Activated T-helper 2 cell treated with anti-CD3 and anti-CD28 coated beads, Interferon-gamma antibody, Interleukin-2, Interleukin-4, amounts not matched to agents 10 μg/mL and 5 μg/mL and 100 μg/mL, durations not matched to agents 14 hours and 24 hours and 36 hours (primary cell): ENCODE measurements at regions of chrX and their contacts with region 1.

Region 1: DNA sequence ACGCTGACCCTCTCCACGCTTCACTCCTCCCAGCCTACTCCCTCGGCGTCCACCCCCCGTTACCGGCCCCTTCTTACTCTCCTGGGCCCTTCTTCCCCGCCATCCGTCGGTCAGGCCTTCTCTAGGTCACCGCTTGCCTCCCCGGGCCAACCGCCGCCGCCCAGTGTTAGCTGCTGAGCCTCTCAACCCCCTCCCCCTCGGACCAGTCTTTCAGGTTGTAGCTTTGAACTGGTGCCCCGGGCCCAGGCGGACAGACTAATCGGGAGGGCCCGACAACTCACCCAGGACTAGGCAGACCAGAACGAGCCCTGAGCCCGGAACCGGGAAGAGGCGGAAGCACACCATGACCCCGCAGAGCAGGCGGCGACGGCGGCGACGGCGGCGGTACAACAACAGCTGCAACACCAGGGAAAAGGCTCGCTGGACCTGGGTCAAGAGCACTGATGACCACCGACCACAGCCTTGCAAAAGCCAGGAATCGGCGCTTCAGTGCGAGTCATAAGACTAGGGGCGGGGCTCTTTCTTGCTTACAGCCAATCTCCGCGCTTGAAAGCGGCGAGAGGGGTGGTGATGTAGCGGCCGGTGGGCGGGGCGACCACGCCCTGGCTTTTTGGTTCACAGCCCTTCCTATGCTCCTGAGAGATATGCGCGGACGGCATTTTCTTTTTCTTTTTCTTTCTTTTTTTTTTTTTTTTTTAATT is at the start of gene LAMP2:
- DNase-seq: peak; percentile 76
- H3K4me3 Mint-ChIP-seq: peak within 1 kb of the TSS; percentile 94
- H3K27ac Mint-ChIP-seq: peak within 1 kb of the TSS; percentile 79
- H3K4me1 Mint-ChIP-seq: peaks cover 19% of the 10 kb centered on the region
- H3K27me3 Mint-ChIP-seq: no peaks in the 10 kb centered on the region
- total RNA-seq, gene LAMP2: 39.8 and 40.7 TPM in 2 replicates

Region 2: DNA sequence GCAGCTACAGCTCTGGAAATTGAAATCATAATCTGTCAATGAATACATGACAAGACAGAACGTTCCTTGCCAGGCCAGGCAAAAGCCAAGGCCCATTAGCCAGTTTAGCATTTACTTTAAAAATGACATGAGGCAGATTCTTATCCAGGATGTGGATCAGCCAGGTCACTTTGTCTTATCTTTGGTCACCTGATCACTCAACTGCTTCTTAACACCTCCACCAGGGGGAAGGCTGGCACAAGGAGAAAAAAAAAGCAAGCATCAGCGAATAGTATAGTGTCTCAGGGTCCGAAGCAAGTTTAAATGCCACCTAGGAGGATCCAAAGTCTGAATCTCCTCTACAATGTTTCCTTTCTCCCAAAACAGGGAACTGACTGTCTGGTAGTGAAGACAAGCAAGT is 88.3 kb before region 1 on chrX:
- intact Hi-C with region 1: loop called (anchors 5 kb)
- DNase-seq: peak; percentile 13
- H3K4me3 Mint-ChIP-seq: no peak overlapping the region
- H3K27ac Mint-ChIP-seq: no peak overlapping the region
- H3K4me1 Mint-ChIP-seq: peaks cover 4% of the 10 kb centered on the region
- H3K27me3 Mint-ChIP-seq: peaks cover 12% of the 10 kb centered on the region

Region 3: DNA sequence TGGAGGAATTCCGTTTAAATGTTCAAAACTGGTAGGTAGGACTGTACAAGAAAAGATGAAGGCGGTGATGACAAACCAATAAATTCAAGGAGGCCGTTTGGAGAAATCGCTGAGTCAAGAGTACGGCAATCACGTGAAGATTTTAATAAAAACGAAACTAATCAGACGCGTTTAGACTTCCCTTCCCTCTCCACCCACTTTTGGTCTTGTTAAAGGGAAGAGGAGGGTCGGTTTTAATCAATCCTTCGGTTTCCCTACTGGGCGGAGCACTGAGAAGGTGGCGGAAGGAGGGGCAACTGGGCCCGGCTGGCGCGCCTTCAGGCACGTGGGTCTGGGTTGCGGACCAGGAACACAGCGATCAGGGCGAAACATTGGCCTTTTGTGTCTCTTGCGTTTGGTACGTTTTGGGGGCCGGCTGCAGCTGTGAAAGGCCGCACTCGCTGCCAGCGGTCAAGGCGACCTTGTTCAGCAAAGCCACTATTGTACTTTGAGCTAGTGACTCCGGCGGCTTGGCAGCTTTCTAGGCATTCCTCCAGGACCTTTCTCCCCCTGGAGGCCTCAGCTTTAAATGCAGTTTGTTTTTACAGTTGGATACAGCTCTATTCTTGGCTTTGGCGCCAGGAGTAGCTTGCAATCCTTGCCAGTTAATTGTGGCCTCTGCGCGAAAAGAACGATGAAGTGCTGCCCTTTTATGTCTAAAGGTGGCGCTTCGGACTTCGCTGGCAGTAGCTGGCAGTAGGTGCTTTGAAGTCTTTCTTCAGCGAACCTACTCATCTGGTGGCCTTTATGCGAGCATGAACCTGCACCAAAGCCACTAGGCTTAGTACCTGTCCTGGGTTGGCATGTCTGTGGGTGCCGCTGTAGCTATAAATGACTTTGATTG is 16.9 kb after region 1 on chrX:
- intact Hi-C with region 1: loop called (anchors 1 kb)
- DNase-seq: peak; percentile 50
- H3K4me3 Mint-ChIP-seq: peak overlapping the region; percentile 72
- H3K27ac Mint-ChIP-seq: peak overlapping the region; percentile 87
- H3K4me1 Mint-ChIP-seq: peaks cover 21% of the 10 kb centered on the region
- H3K27me3 Mint-ChIP-seq: no peaks in the 10 kb centered on the region